GM12878 (cell line): ENCODE measurements at regions of chrX and their contacts with region 1.

Region 1: DNA sequence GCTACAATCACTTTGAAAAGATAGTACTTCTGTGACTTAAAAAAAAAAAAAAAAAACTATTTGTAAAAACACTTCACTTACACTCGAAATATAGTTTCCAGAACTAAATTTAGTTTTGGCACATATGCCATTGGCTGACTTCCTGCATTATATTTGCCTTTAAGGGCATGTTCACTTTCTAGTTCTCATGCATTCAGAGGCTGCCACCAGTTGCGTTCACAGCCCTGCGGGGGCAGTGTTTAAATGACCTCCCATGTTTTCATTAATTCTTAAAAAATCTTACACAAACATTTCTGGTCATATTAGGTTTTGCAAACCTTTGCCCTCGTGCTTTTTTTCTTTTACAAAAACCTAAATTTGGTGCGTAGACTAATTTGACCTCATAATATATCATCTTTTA is 12.4 kb upstream of the ARHGAP6 start:
- DNase-seq: no peak
- ATAC-seq: peak; percentile 77
- H3K4me3 ChIP-seq: no peak overlapping the region
- H3K27ac ChIP-seq: no peak overlapping the region
- H3K4me1 ChIP-seq: no peaks in the 10 kb centered on the region
- H3K27me3 ChIP-seq: no peaks in the 10 kb centered on the region
- CTCF ChIP-seq: peak; percentile 12 to 45 (median 22); a peak in 3 of 6 replicates
- EP300 ChIP-seq: no peak
- POLR2A ChIP-seq: no peak
- RAD21 ChIP-seq: no peak

Region 2: DNA sequence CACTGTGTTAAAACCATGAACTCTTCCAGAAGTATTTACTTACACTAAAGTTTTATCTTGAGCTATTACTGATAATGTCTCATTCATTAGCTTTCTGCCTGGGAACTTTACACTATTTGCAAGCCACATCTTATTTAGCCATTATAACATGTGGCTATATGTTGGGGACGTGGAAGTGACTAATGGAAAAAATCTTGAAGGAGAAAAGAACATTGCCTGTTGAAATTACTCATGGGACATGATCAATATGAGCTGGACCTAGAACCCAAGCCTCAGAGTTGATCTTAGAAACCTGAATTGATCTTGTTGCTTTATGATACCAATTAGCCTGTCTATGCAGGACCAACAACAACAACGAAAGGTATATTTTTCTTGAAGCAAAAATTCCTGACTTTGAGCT is 10.0 kb after region 1 on chrX:
- CTCF ChIA-PET with region 1: interaction called, 3 read pairs
- POLR2A ChIA-PET with region 1: no interaction called
- RAD21 ChIA-PET with region 1: no interaction called
- SMC1A ChIA-PET with region 1: interaction called, 10 read pairs
- in situ Hi-C with region 1: no loop called
- intact Hi-C with region 1: no loop called
- DNase-seq: no peak
- ATAC-seq: no peak
- H3K4me3 ChIP-seq: no peak overlapping the region
- H3K27ac ChIP-seq: no peak overlapping the region
- H3K4me1 ChIP-seq: no peaks in the 10 kb centered on the region
- H3K27me3 ChIP-seq: no peaks in the 10 kb centered on the region
- CTCF ChIP-seq: no peak
- EP300 ChIP-seq: no peak
- POLR2A ChIP-seq: no peak
- RAD21 ChIP-seq: no peak